ENCODE measurements at regions of chr10 and their contacts with region 1.

Region 1: GRCh38 chr10:75401569-75402485 is at the start of gene ZNF503:
- DNase-seq: peak; percentile 86 to 98 (median 96)
- H3K4me3 ChIP-seq: peak within 1 kb of the TSS; percentile 47 to 93 (median 80)
- H3K27ac ChIP-seq: peak within 1 kb of the TSS; percentile 39 to 99 (median 91)
- H3K27me3 ChIP-seq: peaks cover 0 to 65% (median 38%) of the 10 kb centered on the region in 45 donors
- CTCF ChIP-seq: peak in 29 of 56 donors; percentile 6 to 39 (median 16)
- total RNA-seq, gene ZNF503: 3.5 to 16.7 (median 9.6) TPM

Region 2: DNA sequence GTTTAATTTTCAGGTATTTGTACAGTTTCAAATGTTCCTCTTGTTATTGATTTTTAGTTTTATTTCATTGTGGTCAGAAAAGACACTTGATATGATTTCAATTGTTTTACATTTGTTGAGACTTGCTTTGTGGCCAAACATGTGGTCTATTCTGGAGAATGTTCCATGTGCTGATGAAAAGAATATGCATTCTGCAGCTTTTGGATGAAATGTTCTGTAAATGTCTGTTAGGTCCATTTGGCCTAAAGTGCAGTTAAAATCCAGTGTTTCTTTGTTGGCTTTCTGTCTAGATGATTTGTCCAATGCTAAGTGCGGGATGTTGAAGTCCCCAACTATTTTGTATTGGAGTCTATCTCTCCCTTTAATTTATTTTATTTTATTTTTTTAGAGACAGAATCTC is 70.7 kb before region 1 on chr10:
- intact Hi-C with region 1: no loop called
- DNase-seq: no peak
- H3K4me3 ChIP-seq: no peak overlapping the region
- H3K27ac ChIP-seq: no peak overlapping the region
- H3K27me3 ChIP-seq: peaks cover 0 to 12% (median 0%) of the 10 kb centered on the region in 45 donors
- CTCF ChIP-seq: no peak

Region 3: DNA sequence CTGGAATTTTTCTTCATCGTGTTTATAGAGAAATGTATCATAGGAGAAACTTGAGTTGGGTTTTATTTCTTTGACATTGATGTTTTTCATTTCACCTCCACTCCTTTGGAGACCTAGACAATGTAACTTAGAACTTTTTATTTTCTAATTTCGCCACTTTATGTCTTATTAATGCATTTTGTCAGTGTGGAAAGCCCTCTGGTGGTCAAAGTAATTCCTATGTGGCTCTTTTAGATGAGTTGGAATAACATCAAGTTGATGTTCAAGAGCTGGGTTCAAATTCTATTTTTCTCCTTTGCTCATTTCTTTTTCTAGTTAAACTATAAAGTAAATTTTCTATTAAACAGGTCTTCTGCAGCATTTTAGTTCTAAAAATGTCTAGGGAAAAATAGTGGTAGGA is 508.2 kb after region 1 on chr10:
- intact Hi-C with region 1: loop called in 1 of 2 experiments (anchors 10 kb)
- DNase-seq: no peak
- H3K4me3 ChIP-seq: no peak overlapping the region
- H3K27ac ChIP-seq: no peak overlapping the region
- H3K27me3 ChIP-seq: peaks cover 0 to 16% (median 0%) of the 10 kb centered on the region in 45 donors
- CTCF ChIP-seq: peak in 53 of 56 donors; percentile 16 to 64 (median 46)

Region 4: GRCh38 chr10:76036111-76036940 is 634.5 kb after region 1 on chr10:
- intact Hi-C with region 1: loop called (anchors 2 to 5 kb)
- DNase-seq: peak; percentile 39 to 82 (median 67)
- H3K4me3 ChIP-seq: peak overlapping the region in 54 of 59 donors; percentile 3 to 60 (median 41)
- H3K27ac ChIP-seq: peak overlapping the region in 5 of 59 donors; percentile 9 to 25 (median 18)
- H3K27me3 ChIP-seq: peaks cover 0 to 25% (median 0%) of the 10 kb centered on the region in 45 donors
- CTCF ChIP-seq: peak; percentile 81 to 96 (median 91)

Region 5: DNA sequence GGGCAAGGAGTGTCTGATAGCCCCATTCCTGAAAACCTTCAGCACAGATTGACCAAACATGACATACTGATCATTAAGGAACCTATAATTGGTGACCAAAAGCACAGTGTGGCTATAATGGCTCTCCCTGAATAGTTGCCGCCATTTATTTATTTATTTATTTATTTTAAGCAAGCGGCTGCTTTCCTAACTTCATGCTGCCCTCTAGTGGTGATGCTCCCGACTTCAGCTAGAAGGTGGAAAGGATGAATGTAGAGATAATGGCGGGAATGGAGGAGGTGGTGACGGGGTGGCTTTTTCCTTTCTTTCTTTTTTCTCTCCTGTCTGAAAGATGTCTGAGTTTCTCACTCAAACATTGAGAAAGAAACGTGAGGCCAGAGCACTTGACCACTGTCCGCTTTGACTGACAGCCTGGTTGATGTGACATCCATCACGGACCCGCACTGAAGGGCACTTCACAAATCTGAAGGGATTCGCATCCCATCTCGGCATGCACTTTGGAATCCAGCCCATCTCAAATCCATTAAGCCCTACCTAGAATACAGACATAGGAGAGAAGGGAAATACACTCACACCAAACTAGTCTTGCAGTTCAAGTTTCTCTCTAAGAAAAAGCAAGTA is 1145.6 kb after region 1 on chr10:
- intact Hi-C with region 1: loop called (anchors 5 to 10 kb)
- DNase-seq: peak; percentile 29 to 83 (median 74)
- H3K4me3 ChIP-seq: peak overlapping the region in 30 of 59 donors; percentile 5 to 49 (median 33)
- H3K27ac ChIP-seq: no peak overlapping the region
- H3K27me3 ChIP-seq: no peaks in the 10 kb centered on the region
- CTCF ChIP-seq: peak; percentile 59 to 92 (median 84)